ENCODE measurements at regions of chr12 and their contacts with region 1.

Region 1: GRCh38 chr12:47343677-47344567 is 264.2 kb upstream of the AMIGO2 start:
- DNase-seq: no peak
- H3K4me3 Mint-ChIP-seq: no peak overlapping the region
- H3K27ac Mint-ChIP-seq: peak overlapping the region; percentile 86
- H3K4me1 Mint-ChIP-seq: peaks cover 49% of the 10 kb centered on the region
- H3K27me3 Mint-ChIP-seq: no peaks in the 10 kb centered on the region

Region 2: GRCh38 chr12:47231456-47231855 is 112.5 kb before region 1 on chr12:
- CTCF ChIA-PET with region 1: no interaction called
- intact Hi-C with region 1: no loop called
- DNase-seq: no peak
- H3K4me3 Mint-ChIP-seq: no peak overlapping the region
- H3K27ac Mint-ChIP-seq: peak overlapping the region; percentile 62
- H3K4me1 Mint-ChIP-seq: peaks cover 80% of the 10 kb centered on the region
- H3K27me3 Mint-ChIP-seq: no peaks in the 10 kb centered on the region

Region 3: DNA sequence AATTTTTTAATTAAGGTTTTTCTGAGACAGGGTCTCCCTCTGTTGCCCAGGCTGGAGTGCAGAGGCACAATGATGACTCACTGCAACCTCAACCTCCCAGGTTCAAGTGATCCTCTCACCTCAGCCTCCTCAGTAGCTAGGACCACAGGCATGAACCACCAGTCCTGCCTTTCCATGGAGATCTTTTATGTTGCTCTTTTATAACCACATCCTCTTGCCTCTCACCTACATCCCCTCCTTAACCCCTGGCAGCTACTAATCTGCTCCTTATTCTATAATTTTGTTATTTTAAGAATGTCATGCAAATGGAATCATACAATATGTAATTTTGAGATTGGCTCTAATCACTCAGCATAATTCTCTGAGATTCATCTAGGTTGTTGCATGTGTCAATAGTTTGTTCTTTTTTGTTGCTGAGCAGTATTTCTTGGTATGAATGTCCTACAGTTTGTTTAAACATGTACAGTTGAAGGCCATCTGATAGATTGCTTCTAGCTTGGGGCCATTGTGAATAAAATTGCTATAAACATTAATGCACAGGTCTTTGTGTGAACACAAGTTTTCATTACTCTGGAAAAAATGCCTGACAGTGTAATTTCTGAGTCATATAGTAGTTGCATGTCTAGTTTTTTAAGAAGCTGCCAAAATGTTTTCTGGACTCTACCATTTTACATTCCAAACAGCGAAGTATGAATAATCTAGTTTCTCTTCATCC is 14.9 kb before region 1 on chr12:
- CTCF ChIA-PET with region 1: no interaction called
- intact Hi-C with region 1: loop called (anchors 2 kb)
- DNase-seq: peak; percentile 34
- H3K4me3 Mint-ChIP-seq: no peak overlapping the region
- H3K27ac Mint-ChIP-seq: peak overlapping the region; percentile 63
- H3K4me1 Mint-ChIP-seq: peaks cover 41% of the 10 kb centered on the region
- H3K27me3 Mint-ChIP-seq: no peaks in the 10 kb centered on the region